ENCODE measurements at regions of chr12 and their contacts with region 1.

Region 1: GRCh38 chr12:88993651-88994050 is 358.6 kb downstream of the DUSP6 start:
- DNase-seq: peak; percentile 7
- H3K4me3 Mint-ChIP-seq: no peak overlapping the region
- H3K27ac Mint-ChIP-seq: no peak overlapping the region
- H3K4me1 Mint-ChIP-seq: peaks cover 12% of the 10 kb centered on the region
- H3K27me3 Mint-ChIP-seq: no peaks in the 10 kb centered on the region
- CTCF ChIP-seq: peak; percentile 40

Region 2: DNA sequence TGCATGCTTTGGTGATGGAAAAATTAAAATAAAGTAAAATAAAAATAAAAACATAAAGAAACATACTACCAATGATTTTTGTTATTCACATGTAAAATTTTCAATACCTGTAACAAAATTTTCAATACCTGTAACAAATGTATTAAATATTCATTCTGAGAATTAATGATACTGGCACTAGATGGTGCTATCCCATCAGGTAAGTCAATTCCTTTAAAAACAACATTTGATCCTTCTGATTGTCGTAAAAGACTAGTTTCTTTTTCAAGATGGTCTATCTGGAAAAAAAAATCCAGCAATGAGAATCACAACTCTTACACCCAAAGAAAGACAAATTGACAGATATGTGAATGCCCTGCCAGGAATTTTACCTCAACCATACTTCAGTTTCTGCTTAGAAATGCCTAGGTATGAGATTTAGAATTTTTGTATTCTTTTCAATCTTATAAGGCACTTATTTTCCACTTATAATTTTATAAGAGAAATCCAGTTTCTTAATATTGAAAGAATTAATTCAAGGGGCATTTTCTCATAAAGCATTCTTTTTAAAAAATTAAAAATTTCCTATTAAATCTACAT is 882.5 kb before region 1 on chr12:
- CTCF ChIA-PET with region 1: no interaction called
- intact Hi-C with region 1: loop called (anchors 5 kb)
- DNase-seq: no peak
- H3K4me3 Mint-ChIP-seq: peak overlapping the region; percentile 31
- H3K27ac Mint-ChIP-seq: peak overlapping the region; percentile 51
- H3K4me1 Mint-ChIP-seq: no peaks in the 10 kb centered on the region
- H3K27me3 Mint-ChIP-seq: no peaks in the 10 kb centered on the region
- CTCF ChIP-seq: no peak

Region 3: DNA sequence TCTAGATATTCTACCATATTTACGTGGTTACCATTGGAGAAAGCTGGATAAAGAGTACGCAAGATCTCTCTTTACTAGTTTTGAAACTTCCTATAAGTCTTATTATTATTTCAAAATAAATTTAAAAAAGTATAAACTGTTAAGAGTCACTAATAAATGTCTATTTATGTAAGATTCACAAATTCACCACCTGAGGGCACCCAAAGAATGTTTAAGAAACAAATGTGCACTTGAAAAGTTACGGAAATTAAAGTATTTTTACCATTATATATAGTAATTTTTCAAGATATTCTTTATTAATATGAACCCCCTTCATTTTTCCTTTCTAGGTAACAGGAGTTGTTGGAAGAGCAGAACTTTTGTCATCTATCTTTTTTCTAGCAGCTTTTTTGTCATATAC is 839.7 kb before region 1 on chr12:
- CTCF ChIA-PET with region 1: no interaction called
- intact Hi-C with region 1: loop called (anchors 1 kb)
- DNase-seq: peak; percentile 16
- H3K4me3 Mint-ChIP-seq: no peak overlapping the region
- H3K27ac Mint-ChIP-seq: no peak overlapping the region
- H3K4me1 Mint-ChIP-seq: no peaks in the 10 kb centered on the region
- H3K27me3 Mint-ChIP-seq: no peaks in the 10 kb centered on the region
- CTCF ChIP-seq: peak; percentile 54

Region 4: DNA sequence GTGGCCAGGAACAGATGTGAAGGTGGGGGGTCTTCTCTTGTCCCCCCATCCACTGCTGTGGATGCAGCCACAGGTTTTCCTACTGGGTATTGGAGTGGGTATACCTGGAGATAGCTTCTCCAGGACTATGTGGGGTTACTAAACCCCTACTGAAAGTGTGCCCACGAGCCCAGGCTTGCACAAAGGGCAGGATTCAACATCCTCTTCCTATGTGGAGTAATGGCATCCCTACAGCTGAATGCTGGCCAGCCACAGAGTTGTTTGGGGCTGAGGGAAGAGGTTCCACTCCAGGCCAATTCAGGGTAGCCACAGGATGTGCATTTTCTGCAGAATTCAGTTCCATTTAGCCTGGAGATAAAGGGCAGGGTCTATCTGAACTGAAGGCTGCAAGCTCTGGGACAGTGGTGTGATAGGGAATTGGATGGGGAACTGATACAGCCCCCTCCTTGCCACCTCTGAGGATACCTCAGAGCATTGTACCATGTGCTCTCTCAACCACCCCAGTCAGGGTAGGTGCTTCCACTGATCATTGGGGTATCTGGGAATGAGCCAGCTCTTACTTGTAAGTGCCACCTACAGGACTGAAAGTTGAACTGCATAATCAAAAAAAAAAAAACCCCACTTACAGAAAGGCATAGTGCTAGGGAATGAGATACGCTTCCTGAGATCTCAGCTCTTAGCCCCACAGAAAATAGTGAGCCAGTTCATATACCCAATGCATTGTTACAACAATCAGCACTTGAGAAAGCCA is 600.5 kb before region 1 on chr12:
- CTCF ChIA-PET with region 1: no interaction called
- intact Hi-C with region 1: loop called (anchors 10 kb)
- DNase-seq: peak; percentile 14
- H3K4me3 Mint-ChIP-seq: no peak overlapping the region
- H3K27ac Mint-ChIP-seq: no peak overlapping the region
- H3K4me1 Mint-ChIP-seq: no peaks in the 10 kb centered on the region
- H3K27me3 Mint-ChIP-seq: no peaks in the 10 kb centered on the region
- CTCF ChIP-seq: peak; percentile 57

Region 5: GRCh38 chr12:88633312-88633711 is 360.3 kb before region 1 on chr12:
- CTCF ChIA-PET with region 1: interaction called, 7 read pairs
- intact Hi-C with region 1: loop called (anchors 1 kb)
- DNase-seq: no peak
- H3K4me3 Mint-ChIP-seq: no peak overlapping the region
- H3K27ac Mint-ChIP-seq: no peak overlapping the region
- H3K4me1 Mint-ChIP-seq: peaks cover under 1% of the 10 kb centered on the region
- H3K27me3 Mint-ChIP-seq: no peaks in the 10 kb centered on the region
- CTCF ChIP-seq: no peak

Region 6: GRCh38 chr12:88737838-88738472 is 255.7 kb before region 1 on chr12:
- CTCF ChIA-PET with region 1: interaction called, 5 read pairs
- intact Hi-C with region 1: loop called (anchors 2 kb)
- DNase-seq: peak; percentile 24
- H3K4me3 Mint-ChIP-seq: peak overlapping the region; percentile 2
- H3K27ac Mint-ChIP-seq: peak overlapping the region; percentile 74
- H3K4me1 Mint-ChIP-seq: peaks cover 39% of the 10 kb centered on the region
- H3K27me3 Mint-ChIP-seq: no peaks in the 10 kb centered on the region
- CTCF ChIP-seq: no peak

Region 7: GRCh38 chr12:88854260-88854659 is 139.4 kb before region 1 on chr12:
- CTCF ChIA-PET with region 1: interaction called, 3 read pairs
- intact Hi-C with region 1: loop called (anchors 1 kb)
- DNase-seq: peak; percentile 22
- H3K4me3 Mint-ChIP-seq: peak overlapping the region; percentile 8
- H3K27ac Mint-ChIP-seq: peak overlapping the region; percentile 79
- H3K4me1 Mint-ChIP-seq: peaks cover 32% of the 10 kb centered on the region
- H3K27me3 Mint-ChIP-seq: no peaks in the 10 kb centered on the region
- CTCF ChIP-seq: no peak

Region 8: DNA sequence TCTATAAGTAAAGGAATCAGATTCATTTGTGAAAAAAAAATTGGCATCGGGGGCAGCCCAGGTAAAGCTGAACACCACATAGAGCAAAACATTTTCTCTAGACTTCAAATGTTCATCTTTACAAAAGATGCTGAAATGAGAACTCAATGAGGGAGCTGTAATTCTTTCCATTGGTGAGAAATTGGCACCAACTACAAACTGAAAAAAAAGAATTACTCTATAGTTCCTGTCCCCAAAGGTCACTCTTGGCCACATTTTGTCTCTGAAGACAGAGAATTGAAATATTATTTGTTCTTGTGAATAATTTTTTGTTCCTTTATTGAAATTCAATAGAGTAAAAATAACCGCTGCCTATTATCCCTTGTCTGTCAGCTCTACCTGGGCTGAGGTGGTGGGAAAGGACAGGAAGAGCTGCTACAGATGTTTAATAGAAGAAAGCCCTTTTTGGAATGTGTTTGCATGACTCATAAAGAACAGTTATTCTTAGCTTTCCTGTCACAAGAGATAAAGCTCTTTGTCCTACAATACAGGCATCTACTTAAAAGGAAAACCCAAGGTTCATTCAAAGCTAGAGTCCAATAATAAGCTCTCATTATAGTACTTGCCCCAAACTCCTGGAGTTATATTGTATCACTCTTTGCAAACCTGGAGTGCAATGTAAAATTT is 33.3 kb before region 1 on chr12:
- CTCF ChIA-PET with region 1: no interaction called
- intact Hi-C with region 1: no loop called
- DNase-seq: no peak
- H3K4me3 Mint-ChIP-seq: no peak overlapping the region
- H3K27ac Mint-ChIP-seq: no peak overlapping the region
- H3K4me1 Mint-ChIP-seq: peaks cover 38% of the 10 kb centered on the region
- H3K27me3 Mint-ChIP-seq: no peaks in the 10 kb centered on the region
- CTCF ChIP-seq: no peak

Region 9: DNA sequence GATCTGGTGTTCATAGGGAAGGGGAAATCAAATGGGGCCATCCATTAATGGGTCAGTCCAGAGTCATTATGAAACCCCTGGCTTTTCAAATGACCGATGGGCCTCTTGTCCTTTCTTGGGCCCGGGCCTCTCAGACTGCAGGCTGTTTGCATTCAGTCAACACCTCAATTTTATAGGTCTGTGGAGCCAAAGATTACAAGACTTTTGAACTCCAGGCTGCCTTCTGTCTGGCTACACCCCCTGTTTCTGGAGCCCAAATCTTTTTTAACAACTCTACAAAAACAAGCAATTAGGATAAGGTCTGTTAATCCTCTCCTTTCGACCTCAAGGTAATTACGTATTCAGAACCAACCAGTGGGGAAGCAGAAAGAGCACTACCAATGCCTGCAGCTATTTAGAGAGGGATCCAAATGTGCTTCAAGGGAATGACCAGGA is 323.1 kb after region 1 on chr12:
- CTCF ChIA-PET with region 1: no interaction called
- intact Hi-C with region 1: no loop called
- DNase-seq: no peak
- H3K4me3 Mint-ChIP-seq: no peak overlapping the region
- H3K27ac Mint-ChIP-seq: no peak overlapping the region
- H3K4me1 Mint-ChIP-seq: no peaks in the 10 kb centered on the region
- H3K27me3 Mint-ChIP-seq: no peaks in the 10 kb centered on the region
- CTCF ChIP-seq: no peak